ENCODE measurements at regions of chr3 and their contacts with region 1.

Region 1: GRCh38 chr3:124557-125179 is 71.9 kb upstream of the CHL1 start:
- DNase-seq: no peak
- ATAC-seq: peak in 1 of 2 donors; percentile 55

Region 2: GRCh38 chr3:159974-160373 is 35.3 kb after region 1 on chr3:
- intact Hi-C with region 1: no loop called
- DNase-seq: no peak
- ATAC-seq: no peak

Region 3: GRCh38 chr3:355622-356021 is 231.0 kb after region 1 on chr3:
- intact Hi-C with region 1: loop called in 1 of 2 experiments (anchors 5 kb)
- DNase-seq: no peak
- ATAC-seq: peak in 1 of 2 donors; percentile 76